ENCODE measurements at regions of chr11 and their contacts with region 1.

Region 1: GRCh38 chr11:19561011-19561410 is 151.6 kb upstream of the NAV2 start:
- DNase-seq: no peak
- ATAC-seq: no peak
- H3K4me3 ChIP-seq: no peak overlapping the region
- H3K27ac ChIP-seq: no peak overlapping the region
- H3K4me1 ChIP-seq: peaks cover 0 to 13% (median 7%) of the 10 kb centered on the region in 12 donors
- H3K27me3 ChIP-seq: peaks cover 0 to 12% (median 0%) of the 10 kb centered on the region in 9 donors
- CTCF ChIP-seq: no peak
- POLR2A ChIP-seq: no peak

Region 2: DNA sequence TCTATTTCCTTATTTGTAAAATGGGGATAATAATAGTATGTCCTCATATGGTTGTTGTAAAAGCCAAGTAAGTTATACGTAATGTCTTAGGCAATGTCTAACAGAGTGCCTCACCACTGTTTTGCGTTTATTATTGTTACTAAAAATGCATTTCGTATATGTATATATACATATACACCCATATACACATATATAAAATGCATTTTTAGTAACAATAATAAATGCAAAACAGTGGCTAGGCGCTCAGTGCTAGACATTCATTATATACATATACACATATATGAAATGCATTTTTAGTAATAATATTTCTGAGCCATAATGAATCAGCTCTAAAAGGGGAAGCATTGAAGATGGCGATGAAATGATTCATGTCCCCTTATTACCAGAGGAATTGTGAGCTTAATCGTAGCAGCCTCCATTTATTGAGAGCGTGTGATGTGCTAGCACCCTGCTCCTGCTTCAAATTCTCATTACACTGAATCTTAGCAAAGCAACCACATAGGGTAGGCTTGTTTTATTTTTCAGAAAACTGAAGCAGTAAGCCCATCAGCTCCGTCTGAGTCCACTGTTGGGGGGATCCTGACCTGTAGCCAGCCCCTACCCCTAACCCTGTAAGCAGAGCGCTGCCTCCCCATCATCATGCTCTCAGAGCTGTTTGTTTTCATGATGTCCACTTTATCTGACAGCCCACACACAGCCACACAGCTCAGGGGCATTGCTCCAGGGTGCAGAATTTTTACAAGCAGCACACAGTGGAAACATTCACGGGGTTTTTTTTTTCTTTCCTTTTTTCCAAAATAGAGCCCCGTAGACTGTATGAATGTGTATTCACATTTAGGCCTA is 54.6 kb after region 1 on chr11:
- intact Hi-C with region 1: no loop called
- DNase-seq: no peak
- ATAC-seq: peak in 2 of 4 donors; percentile 20 to 26
- H3K4me3 ChIP-seq: no peak overlapping the region
- H3K27ac ChIP-seq: peak overlapping the region in 1 of 12 donors; percentile 62
- H3K4me1 ChIP-seq: peaks cover 0 to 15% (median 0%) of the 10 kb centered on the region in 12 donors
- H3K27me3 ChIP-seq: no peaks in the 10 kb centered on the region
- CTCF ChIP-seq: no peak
- POLR2A ChIP-seq: no peak

Region 3: DNA sequence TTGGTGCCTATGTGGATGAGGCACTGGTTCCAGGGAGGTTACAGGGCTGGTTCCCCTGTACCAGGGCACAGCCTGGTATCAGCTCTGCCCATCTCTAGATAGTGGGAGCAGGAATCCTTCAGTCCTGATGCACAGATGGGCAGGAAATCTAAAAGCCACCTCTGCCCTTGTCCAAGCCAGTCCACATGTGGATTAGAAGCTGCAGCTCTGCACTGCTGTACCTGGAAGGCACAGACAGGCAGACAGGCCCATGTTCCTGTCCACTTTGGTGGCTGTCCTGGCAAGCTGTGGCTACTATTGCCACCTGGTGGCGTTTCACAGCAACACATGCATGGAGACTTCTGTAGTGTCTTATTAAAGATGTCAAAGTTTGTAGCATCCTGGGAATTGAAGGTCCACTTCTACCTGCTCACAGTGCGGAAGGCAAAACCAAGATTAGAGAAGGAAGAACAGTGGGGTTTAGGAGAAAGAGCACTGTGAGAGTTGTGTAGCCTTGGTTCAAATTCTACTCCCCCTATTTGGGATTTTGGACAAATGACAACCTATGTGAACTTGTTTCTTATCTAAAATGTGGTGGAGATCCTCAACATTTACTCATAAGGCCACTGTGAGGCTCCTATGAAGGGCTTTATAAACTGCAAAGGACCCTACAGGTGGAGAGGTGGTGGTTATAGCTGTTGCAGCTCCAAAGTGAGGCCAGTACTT is 181.7 kb after region 1 on chr11:
- intact Hi-C with region 1: loop called (anchors 1 to 2 kb)
- DNase-seq: peak; percentile 75 to 85 (median 79)
- ATAC-seq: peak; percentile 70 to 86 (median 83)
- H3K4me3 ChIP-seq: no peak overlapping the region
- H3K27ac ChIP-seq: peak overlapping the region in 2 of 12 donors; percentile 7 to 25
- H3K4me1 ChIP-seq: peaks cover 0 to 48% (median 10%) of the 10 kb centered on the region in 12 donors
- H3K27me3 ChIP-seq: no peaks in the 10 kb centered on the region
- CTCF ChIP-seq: peak; percentile 81 to 95 (median 89)
- POLR2A ChIP-seq: no peak

Region 4: GRCh38 chr11:19808076-19808911 is 247.3 kb after region 1 on chr11:
- intact Hi-C with region 1: loop called (anchors 2 to 10 kb)
- DNase-seq: no peak
- ATAC-seq: no peak
- H3K4me3 ChIP-seq: no peak overlapping the region
- H3K27ac ChIP-seq: no peak overlapping the region
- H3K4me1 ChIP-seq: peaks cover 0 to 65% (median 24%) of the 10 kb centered on the region in 12 donors
- H3K27me3 ChIP-seq: no peaks in the 10 kb centered on the region
- CTCF ChIP-seq: peak in 8 of 12 donors; percentile 8 to 55 (median 38)
- POLR2A ChIP-seq: no peak

Region 5: DNA sequence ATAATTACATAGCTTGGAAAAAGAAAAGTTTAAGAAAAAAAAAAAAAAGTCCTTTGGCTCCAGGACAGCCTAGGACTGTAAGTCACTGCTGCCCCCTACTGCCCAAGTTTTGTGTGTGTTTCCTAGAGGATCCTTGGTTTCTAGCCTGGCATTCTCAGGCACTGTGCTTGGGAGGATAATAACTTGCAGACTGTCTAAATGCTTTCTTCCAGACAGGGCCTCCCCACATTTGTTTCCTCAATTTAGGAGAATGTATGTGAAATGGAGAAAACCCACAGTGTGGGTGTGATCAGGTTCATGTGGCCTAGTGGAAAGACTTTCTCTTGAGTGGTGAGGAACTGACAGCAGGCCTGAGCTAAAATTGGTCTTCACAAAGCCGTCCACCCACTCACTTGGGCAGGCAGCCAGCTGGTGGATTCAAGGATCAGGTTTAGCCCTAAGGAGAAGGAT is 342.6 kb after region 1 on chr11:
- intact Hi-C with region 1: loop called (anchors 1 to 5 kb)
- DNase-seq: peak in 4 of 5 donors; percentile 46 to 75 (median 68)
- ATAC-seq: peak; percentile 44 to 73 (median 63)
- H3K4me3 ChIP-seq: no peak overlapping the region
- H3K27ac ChIP-seq: peak overlapping the region in 1 of 12 donors; percentile 10
- H3K4me1 ChIP-seq: peaks cover 0 to 26% (median 5%) of the 10 kb centered on the region in 12 donors
- H3K27me3 ChIP-seq: no peaks in the 10 kb centered on the region
- CTCF ChIP-seq: peak; percentile 68 to 85 (median 76)
- POLR2A ChIP-seq: no peak

Measured in heart left ventricle (tissue), 16 donors.